Transverse colon (tissue), 4 donors: ENCODE measurements at regions of chr16 and their contacts with region 1.

Region 1: GRCh38 chr16:11915644-11916523 is at the start of gene GSPT1:
- DNase-seq: peak; percentile 99
- H3K4me3 ChIP-seq: peak within 1 kb of the TSS; percentile 88 to 98 (median 95)
- H3K27ac ChIP-seq: peak within 1 kb of the TSS; percentile 97 to 99 (median 98)
- H3K4me1 ChIP-seq: peaks cover 9 to 47% (median 34%) of the 10 kb centered on the region in 4 donors
- H3K27me3 ChIP-seq: no peaks in the 10 kb centered on the region
- CTCF ChIP-seq: peak in 4 of 5 experiments; percentile 20 to 82 (median 40)
- EP300 ChIP-seq: no peak
- POLR2A ChIP-seq: peak; percentile 93
- total RNA-seq, gene GSPT1: 29.9 to 98.9 (median 64.6) TPM

Region 2: DNA sequence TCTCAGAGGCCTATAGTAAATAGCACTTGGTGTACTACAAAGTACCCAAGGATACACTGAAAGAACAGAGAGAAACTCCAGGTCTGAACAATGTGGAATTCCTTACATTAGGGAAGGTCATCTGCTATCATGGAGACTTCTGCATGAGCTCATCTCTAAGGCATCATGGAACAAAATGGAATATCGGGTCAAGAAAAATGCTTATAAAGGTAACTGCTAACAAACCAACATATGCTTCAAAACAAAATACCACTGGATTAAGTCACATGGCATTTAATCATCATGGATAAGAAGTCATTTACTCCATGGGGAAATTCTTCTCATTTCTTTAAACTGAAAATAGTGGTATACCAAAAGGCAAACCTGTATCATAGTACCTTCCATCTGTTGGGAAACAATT is 207.5 kb before region 1 on chr16:
- in situ Hi-C with region 1: no loop called
- intact Hi-C with region 1: no loop called
- DNase-seq: no peak
- H3K4me3 ChIP-seq: no peak overlapping the region
- H3K27ac ChIP-seq: no peak overlapping the region
- H3K4me1 ChIP-seq: no peaks in the 10 kb centered on the region
- H3K27me3 ChIP-seq: no peaks in the 10 kb centered on the region
- CTCF ChIP-seq: no peak
- EP300 ChIP-seq: no peak
- POLR2A ChIP-seq: no peak

Region 3: DNA sequence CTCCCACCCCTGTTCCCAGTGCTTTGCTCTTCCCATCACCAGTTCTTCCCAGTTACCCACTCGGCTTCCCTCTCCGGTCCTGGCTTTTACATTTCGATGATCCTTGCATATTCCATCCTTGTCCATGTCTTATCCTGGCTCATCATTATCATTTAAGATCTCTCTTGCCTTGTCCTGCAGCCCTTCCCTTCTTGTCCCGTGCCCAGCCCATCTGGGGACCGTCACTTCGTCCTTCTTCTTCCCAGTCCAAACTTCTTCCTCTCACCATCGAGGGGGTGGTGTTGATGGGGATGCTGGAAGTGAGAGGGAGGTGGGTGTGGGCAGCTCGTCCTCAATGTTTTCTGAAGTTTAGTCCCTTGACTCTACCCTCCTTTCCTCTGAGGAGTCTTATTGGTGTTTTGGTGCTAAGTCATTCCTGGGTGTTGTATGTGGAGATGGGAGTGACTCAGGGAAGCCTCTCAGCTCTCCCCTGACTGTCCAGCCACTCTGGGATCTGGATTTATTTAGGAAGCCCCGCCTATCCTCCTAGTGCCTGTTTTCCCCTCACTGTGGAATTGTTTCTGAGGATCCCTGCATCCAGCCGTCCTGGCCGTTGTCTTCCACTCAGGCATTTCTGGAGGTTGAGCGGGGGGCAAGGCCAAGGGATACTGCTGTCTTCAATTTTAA is 61.6 kb after region 1 on chr16:
- in situ Hi-C with region 1: no loop called
- intact Hi-C with region 1: loop called (anchors 5 kb)
- DNase-seq: peak; percentile 24
- H3K4me3 ChIP-seq: peak overlapping the region; percentile 84 to 100 (median 100)
- H3K27ac ChIP-seq: peak overlapping the region; percentile 85 to 95 (median 92)
- H3K4me1 ChIP-seq: peaks cover 0 to 28% (median 21%) of the 10 kb centered on the region in 4 donors
- H3K27me3 ChIP-seq: no peaks in the 10 kb centered on the region
- CTCF ChIP-seq: no peak
- EP300 ChIP-seq: no peak
- POLR2A ChIP-seq: no peak

Region 4: GRCh38 chr16:12158428-12158827 is 242.5 kb after region 1 on chr16:
- in situ Hi-C with region 1: no loop called
- intact Hi-C with region 1: no loop called
- DNase-seq: no peak
- H3K4me3 ChIP-seq: no peak overlapping the region
- H3K27ac ChIP-seq: no peak overlapping the region
- H3K4me1 ChIP-seq: peaks cover 0 to 5% (median 3%) of the 10 kb centered on the region in 4 donors
- H3K27me3 ChIP-seq: no peaks in the 10 kb centered on the region
- CTCF ChIP-seq: no peak
- EP300 ChIP-seq: no peak
- POLR2A ChIP-seq: no peak

Region 5: DNA sequence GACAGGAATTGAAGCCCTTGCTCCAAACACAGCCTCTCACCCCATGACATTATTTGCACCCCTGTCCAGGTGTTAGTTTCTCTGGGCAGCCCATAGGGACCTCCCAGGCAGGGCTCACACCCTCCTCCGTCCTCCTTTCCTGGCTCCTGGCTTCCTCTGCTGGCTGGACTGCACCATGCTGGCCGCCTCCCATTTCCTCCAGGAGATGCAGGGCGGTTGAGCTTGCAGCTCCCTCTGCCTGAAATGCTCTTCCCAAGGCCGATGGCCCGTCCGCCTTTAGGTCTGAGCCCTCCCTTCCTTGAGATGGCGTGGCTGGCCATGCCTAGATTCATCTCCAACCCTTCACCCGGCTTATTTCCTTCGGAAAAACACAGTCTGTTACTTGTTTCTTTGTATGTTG is 395.4 kb after region 1 on chr16:
- in situ Hi-C with region 1: no loop called
- intact Hi-C with region 1: no loop called
- DNase-seq: no peak
- H3K4me3 ChIP-seq: no peak overlapping the region
- H3K27ac ChIP-seq: no peak overlapping the region
- H3K4me1 ChIP-seq: peaks cover 5 to 38% (median 13%) of the 10 kb centered on the region in 4 donors
- H3K27me3 ChIP-seq: no peaks in the 10 kb centered on the region
- CTCF ChIP-seq: no peak
- EP300 ChIP-seq: no peak
- POLR2A ChIP-seq: no peak